T-cell (primary cell): ENCODE measurements at regions of chr16 and their contacts with region 1.

Region 1: GRCh38 chr16:4386451-4386805 is 14.8 kb downstream of the VASN start:
- DNase-seq: no peak
- ATAC-seq: no peak
- H3K4me3 ChIP-seq: no peak overlapping the region
- H3K4me3 Mint-ChIP-seq: no peak overlapping the region
- H3K27ac ChIP-seq: no peak overlapping the region
- H3K27ac Mint-ChIP-seq: no peak overlapping the region
- H3K4me1 ChIP-seq: peaks cover 0 to 6% of the 10 kb centered on the region in 2 experiments
- H3K4me1 Mint-ChIP-seq: no peaks in the 10 kb centered on the region
- H3K27me3 ChIP-seq: no peaks in the 10 kb centered on the region
- H3K27me3 Mint-ChIP-seq: no peaks in the 10 kb centered on the region

Region 2: DNA sequence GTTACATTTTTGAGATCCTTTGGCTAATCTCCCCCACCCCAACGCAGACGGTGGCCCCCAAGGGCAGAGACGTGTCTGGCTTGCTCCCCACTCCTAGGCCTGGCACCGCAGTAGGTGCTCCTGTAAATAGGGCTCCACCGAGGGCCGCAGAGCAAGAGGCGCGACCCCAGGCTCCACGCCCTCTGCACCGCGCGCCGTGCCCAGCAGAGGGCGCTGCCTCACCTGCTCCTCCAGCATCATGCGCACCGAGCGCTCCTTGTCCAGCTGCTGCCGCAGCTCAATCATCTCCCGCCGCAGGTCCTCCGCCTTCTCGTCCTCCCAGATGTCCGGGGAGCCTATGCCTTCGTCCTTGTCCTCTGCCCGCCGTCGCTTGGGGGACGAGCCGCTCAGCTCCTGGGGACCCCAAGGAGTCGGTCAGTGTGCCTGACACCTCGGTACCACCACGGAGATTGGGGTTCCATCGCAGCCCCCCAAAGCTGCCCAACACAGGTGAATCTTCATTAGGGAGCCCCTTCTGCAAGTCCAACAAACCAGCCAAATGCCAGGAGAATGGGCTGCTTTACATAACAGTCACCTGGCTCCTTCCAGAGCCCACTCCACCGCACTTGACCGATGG is 124.8 kb before region 1 on chr16:
- CTCF ChIA-PET with region 1: no interaction called
- POLR2A ChIA-PET with region 1: no interaction called
- DNase-seq: peak in 17 of 35 experiments; percentile 5 to 56 (median 20)
- ATAC-seq: peak in 2 of 4 experiments; percentile 52 to 64
- H3K4me3 ChIP-seq: no peak overlapping the region
- H3K4me3 Mint-ChIP-seq: no peak overlapping the region
- H3K27ac ChIP-seq: no peak overlapping the region
- H3K27ac Mint-ChIP-seq: no peak overlapping the region
- H3K4me1 ChIP-seq: peaks cover 0 to 4% of the 10 kb centered on the region in 2 experiments
- H3K4me1 Mint-ChIP-seq: peaks cover 8 to 11% (median 8%) of the 10 kb centered on the region in 3 donors
- H3K27me3 ChIP-seq: no peaks in the 10 kb centered on the region
- H3K27me3 Mint-ChIP-seq: no peaks in the 10 kb centered on the region

Region 3: GRCh38 chr16:4319454-4320421 is 66.7 kb before region 1 on chr16:
- CTCF ChIA-PET with region 1: no interaction called
- POLR2A ChIA-PET with region 1: interaction called in 1 of 2 experiments, 12 read pairs
- DNase-seq: peak in 30 of 35 experiments; percentile 25 to 72 (median 44)
- ATAC-seq: peak; percentile 24 to 67 (median 38)
- H3K4me3 ChIP-seq: no peak overlapping the region
- H3K4me3 Mint-ChIP-seq: no peak overlapping the region
- H3K27ac ChIP-seq: no peak overlapping the region
- H3K27ac Mint-ChIP-seq: no peak overlapping the region
- H3K4me1 ChIP-seq: peaks cover 0 to 31% of the 10 kb centered on the region in 2 experiments
- H3K4me1 Mint-ChIP-seq: peaks cover 3 to 8% (median 7%) of the 10 kb centered on the region in 3 donors
- H3K27me3 ChIP-seq: peaks cover 0 to 48% of the 10 kb centered on the region in 2 experiments
- H3K27me3 Mint-ChIP-seq: peaks cover 2 to 5% of the 10 kb centered on the region in 2 donors

Region 4: GRCh38 chr16:4435337-4436067 is 49.1 kb after region 1 on chr16:
- CTCF ChIA-PET with region 1: no interaction called
- POLR2A ChIA-PET with region 1: no interaction called
- DNase-seq: no peak
- ATAC-seq: no peak
- H3K4me3 ChIP-seq: no peak overlapping the region
- H3K4me3 Mint-ChIP-seq: no peak overlapping the region
- H3K27ac ChIP-seq: no peak overlapping the region
- H3K27ac Mint-ChIP-seq: peak overlapping the region in 1 of 2 donors; percentile 55
- H3K4me1 ChIP-seq: no peaks in the 10 kb centered on the region
- H3K4me1 Mint-ChIP-seq: peaks cover 10 to 21% (median 15%) of the 10 kb centered on the region in 3 donors
- H3K27me3 ChIP-seq: no peaks in the 10 kb centered on the region
- H3K27me3 Mint-ChIP-seq: no peaks in the 10 kb centered on the region